Calu3 (cell line): ENCODE measurements at regions of chr1 and their contacts with region 1.

Region 1: GRCh38 chr1:86833461-86834215 is 80.3 kb downstream of the SELENOF start:
- DNase-seq: peak; percentile 73
- H3K4me3 Mint-ChIP-seq: no peak overlapping the region
- H3K27ac Mint-ChIP-seq: no peak overlapping the region
- H3K4me1 Mint-ChIP-seq: peaks cover 10% of the 10 kb centered on the region
- H3K27me3 Mint-ChIP-seq: no peaks in the 10 kb centered on the region
- CTCF ChIP-seq: peak; percentile 46

Region 2: GRCh38 chr1:86965012-86965826 is 131.6 kb after region 1 on chr1:
- CTCF ChIA-PET with region 1: interaction called, 8 read pairs
- intact Hi-C with region 1: loop called (anchors 1 kb)
- DNase-seq: peak; percentile 27
- H3K4me3 Mint-ChIP-seq: no peak overlapping the region
- H3K27ac Mint-ChIP-seq: no peak overlapping the region
- H3K4me1 Mint-ChIP-seq: no peaks in the 10 kb centered on the region
- H3K27me3 Mint-ChIP-seq: no peaks in the 10 kb centered on the region
- CTCF ChIP-seq: peak; percentile 60

Region 3: GRCh38 chr1:87024936-87025540 is 191.4 kb after region 1 on chr1:
- CTCF ChIA-PET with region 1: no interaction called
- intact Hi-C with region 1: loop called (anchors 2 kb)
- DNase-seq: peak; percentile 13
- H3K4me3 Mint-ChIP-seq: no peak overlapping the region
- H3K27ac Mint-ChIP-seq: no peak overlapping the region
- H3K4me1 Mint-ChIP-seq: peaks cover 7% of the 10 kb centered on the region
- H3K27me3 Mint-ChIP-seq: no peaks in the 10 kb centered on the region
- CTCF ChIP-seq: peak; percentile 31

Region 4: DNA sequence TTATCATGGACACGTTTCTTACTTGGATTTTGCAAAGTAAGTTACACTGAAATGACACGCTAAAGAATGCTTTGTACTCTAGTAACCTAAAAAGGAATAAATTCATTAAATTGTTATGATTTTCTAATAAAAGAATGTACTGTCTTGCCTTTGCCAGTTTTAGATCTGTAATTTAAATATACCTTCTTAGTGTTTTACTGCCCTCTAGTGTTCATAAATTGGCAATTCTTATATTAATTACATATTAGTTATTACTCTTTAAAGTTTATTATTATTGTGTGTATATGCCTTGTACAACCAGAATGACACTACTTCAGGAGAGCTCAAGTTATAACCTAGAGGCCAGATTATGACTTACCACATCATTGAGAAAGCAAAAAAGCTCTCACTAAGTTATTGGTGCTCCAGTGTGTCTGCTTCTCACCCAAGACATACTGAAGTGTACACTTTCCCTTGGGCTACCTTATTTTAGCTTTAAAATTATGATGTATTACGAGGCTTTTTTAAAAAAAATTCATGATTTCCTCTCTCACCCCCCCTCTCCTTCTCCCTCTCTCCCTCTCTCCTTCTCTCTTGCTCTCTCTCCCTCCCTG is 250.7 kb after region 1 on chr1:
- CTCF ChIA-PET with region 1: interaction called, 4 read pairs
- intact Hi-C with region 1: loop called (anchors 1 kb)
- DNase-seq: no peak
- H3K4me3 Mint-ChIP-seq: no peak overlapping the region
- H3K27ac Mint-ChIP-seq: no peak overlapping the region
- H3K4me1 Mint-ChIP-seq: peaks cover 3% of the 10 kb centered on the region
- H3K27me3 Mint-ChIP-seq: no peaks in the 10 kb centered on the region
- CTCF ChIP-seq: peak; percentile 50